ENCODE measurements at regions of chr9 and their contacts with region 1.

Region 1: DNA sequence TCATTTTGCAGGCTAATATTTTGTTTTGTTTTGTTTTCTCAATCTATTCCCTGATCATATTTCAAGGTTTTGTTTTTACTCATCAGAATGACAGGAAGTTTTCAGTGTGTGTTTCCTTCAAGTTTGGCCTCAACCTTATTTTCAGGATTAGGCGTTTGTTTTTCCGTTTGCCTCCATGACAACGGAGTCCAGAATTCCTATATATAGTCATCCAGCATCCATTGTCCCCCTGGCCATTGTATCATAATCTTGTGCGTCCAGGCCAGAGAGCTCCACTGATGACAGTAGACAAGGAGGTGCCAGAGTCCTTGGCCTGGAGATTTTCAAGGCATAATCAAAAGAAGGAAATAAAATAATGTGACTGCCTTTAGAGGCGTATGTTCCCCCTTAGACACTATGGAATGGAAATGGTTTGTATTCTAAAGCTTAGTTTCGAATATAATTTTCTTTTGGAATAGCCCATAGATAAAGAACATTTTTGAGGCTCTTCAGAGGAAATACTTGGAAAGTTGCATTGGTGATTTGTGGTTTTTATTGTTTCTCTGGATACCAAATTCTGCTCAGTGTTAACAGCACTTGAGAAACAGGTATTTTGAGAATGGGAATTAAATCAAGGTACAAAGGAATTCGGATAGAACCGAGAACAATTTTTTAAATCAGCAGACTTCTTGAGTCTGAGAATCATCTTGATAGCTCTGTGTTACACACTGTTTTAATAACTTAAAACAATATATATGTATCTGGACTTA is 99.8 kb downstream of the ZNF462 start:
- DNase-seq: no peak
- H3K4me3 Mint-ChIP-seq: no peak overlapping the region
- H3K27ac Mint-ChIP-seq: no peak overlapping the region
- H3K4me1 Mint-ChIP-seq: peaks cover 22% of the 10 kb centered on the region
- H3K27me3 Mint-ChIP-seq: peaks cover 3% of the 10 kb centered on the region

Region 2: GRCh38 chr9:106830527-106831150 is 132.2 kb before region 1 on chr9:
- CTCF ChIA-PET with region 1: no interaction called
- intact Hi-C with region 1: no loop called
- DNase-seq: no peak
- H3K4me3 Mint-ChIP-seq: no peak overlapping the region
- H3K27ac Mint-ChIP-seq: no peak overlapping the region
- H3K4me1 Mint-ChIP-seq: no peaks in the 10 kb centered on the region
- H3K27me3 Mint-ChIP-seq: no peaks in the 10 kb centered on the region

Region 3: GRCh38 chr9:106921341-106921899 is 41.4 kb before region 1 on chr9:
- CTCF ChIA-PET with region 1: no interaction called
- intact Hi-C with region 1: loop called (anchors 1 kb)
- DNase-seq: peak; percentile 45
- H3K4me3 Mint-ChIP-seq: no peak overlapping the region
- H3K27ac Mint-ChIP-seq: no peak overlapping the region
- H3K4me1 Mint-ChIP-seq: peaks cover 12% of the 10 kb centered on the region
- H3K27me3 Mint-ChIP-seq: no peaks in the 10 kb centered on the region

Region 4: GRCh38 chr9:106945727-106946660 is 16.8 kb before region 1 on chr9:
- CTCF ChIA-PET with region 1: no interaction called
- intact Hi-C with region 1: no loop called
- DNase-seq: no peak
- H3K4me3 Mint-ChIP-seq: no peak overlapping the region
- H3K27ac Mint-ChIP-seq: no peak overlapping the region
- H3K4me1 Mint-ChIP-seq: no peaks in the 10 kb centered on the region
- H3K27me3 Mint-ChIP-seq: no peaks in the 10 kb centered on the region

Region 5: DNA sequence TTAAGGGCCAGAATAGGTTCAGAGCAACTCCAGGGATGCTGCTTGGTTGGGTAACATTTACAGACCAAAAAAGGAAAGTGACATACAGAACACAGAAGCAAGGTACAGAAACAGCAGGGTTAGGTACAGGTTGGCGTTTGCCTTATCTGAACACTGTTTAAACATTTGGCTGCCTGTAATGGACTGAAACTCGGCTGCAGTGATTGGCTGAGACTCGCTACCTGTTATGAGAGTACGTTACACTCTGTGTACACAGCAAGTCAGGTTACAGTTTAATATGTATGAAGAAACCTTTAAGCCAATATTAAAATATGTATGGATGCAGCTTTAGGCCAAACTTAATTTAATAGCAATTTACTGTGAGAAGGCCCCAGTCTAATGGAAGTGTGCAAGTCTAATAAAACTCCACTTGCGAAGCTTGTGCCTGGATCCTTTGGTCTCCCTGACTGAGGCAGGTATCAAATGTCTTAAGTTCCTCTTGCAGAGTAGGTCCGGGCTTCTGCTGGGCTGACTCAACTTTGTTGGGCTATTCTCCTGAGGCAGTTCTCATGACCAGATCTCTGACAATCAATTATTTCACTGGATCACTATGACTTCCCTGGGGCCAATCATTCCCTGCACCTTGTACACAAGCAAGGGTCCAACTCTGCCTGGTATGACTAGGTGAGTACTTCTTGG is 105.1 kb after region 1 on chr9:
- CTCF ChIA-PET with region 1: no interaction called
- intact Hi-C with region 1: no loop called
- DNase-seq: no peak
- H3K4me3 Mint-ChIP-seq: no peak overlapping the region
- H3K27ac Mint-ChIP-seq: no peak overlapping the region
- H3K4me1 Mint-ChIP-seq: no peaks in the 10 kb centered on the region
- H3K27me3 Mint-ChIP-seq: no peaks in the 10 kb centered on the region

Region 6: DNA sequence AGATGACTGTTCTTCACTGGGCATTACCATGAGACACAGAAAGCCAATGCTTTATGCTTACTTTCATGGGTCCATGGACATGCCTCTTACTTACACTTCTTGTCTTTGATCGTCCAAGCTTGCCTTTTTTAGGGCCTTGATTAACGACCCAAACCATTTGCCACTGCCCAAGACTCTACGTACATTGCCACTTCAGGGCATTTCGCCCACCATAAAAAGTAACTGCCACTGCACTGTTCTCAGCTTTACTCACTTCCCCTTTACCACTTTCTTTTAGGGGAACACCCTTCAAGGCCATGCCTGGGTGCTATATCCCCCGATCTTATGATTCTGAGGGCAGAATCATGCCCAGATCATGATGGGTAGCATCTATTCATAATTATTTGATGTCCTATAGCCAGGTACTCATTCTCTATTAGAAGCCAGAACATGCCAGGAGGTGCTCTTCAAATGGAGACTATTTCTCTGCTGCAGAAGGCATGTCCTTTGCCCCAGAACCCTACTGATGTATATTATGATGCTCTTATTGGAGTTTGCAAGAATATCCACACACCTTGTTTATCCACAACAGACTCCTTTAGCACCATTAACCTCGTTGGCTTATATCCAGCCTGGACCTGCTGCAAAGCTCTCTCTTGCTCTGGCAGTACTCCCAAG is 256.2 kb after region 1 on chr9:
- CTCF ChIA-PET with region 1: no interaction called
- intact Hi-C with region 1: no loop called
- DNase-seq: no peak
- H3K4me3 Mint-ChIP-seq: no peak overlapping the region
- H3K27ac Mint-ChIP-seq: no peak overlapping the region
- H3K4me1 Mint-ChIP-seq: peaks cover 4% of the 10 kb centered on the region
- H3K27me3 Mint-ChIP-seq: peaks cover 2% of the 10 kb centered on the region

Region 7: DNA sequence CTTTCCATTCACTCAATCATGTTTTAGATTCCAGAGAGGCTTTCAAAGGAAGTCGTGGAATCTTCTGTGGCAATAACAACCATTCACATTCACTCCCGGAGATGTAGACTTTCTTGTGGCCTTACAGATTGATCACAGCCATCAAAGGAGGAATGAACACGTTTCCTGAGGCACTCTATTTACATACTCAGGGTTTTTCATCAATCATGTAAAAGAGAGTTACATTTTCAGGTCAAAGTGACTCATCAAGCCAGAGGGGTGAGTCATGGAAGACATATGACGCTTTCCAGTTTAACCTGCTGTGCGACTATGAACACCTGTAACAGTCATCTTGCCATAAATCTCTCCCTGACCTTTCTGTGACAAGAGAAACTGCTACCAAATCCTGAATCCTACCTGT is 281.0 kb after region 1 on chr9:
- CTCF ChIA-PET with region 1: no interaction called
- intact Hi-C with region 1: loop called (anchors 1 kb)
- DNase-seq: peak; percentile 79
- H3K4me3 Mint-ChIP-seq: no peak overlapping the region
- H3K27ac Mint-ChIP-seq: peak overlapping the region; percentile 73
- H3K4me1 Mint-ChIP-seq: peaks cover 33% of the 10 kb centered on the region
- H3K27me3 Mint-ChIP-seq: peaks cover 1% of the 10 kb centered on the region